ENCODE measurements at regions of chr4 and their contacts with region 1.

Region 1: DNA sequence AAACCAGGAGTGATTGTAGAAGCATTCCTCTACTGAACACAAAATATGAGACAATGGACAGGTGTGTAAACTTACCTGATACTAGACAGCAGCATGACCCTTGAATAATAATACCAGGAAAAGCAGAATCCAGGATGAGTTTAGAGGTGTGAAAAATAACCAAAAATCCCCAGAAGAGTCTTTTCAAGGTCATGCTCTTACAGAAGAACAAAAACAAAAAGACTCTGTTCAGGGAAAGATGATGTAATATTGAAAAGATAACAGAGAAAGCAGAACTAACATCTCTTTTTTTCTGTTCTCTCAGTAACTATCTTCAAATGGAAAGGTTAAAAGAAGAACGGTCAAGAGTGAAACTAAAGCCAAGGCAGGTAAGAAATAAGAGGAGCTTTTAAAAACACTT is 14.0 kb upstream of the ARHGAP10 start:
- DNase-seq: no peak
- H3K4me3 Mint-ChIP-seq: no peak overlapping the region
- H3K27ac Mint-ChIP-seq: no peak overlapping the region
- H3K4me1 Mint-ChIP-seq: peaks cover 10% of the 10 kb centered on the region
- H3K27me3 Mint-ChIP-seq: peaks cover 18% of the 10 kb centered on the region

Region 2: DNA sequence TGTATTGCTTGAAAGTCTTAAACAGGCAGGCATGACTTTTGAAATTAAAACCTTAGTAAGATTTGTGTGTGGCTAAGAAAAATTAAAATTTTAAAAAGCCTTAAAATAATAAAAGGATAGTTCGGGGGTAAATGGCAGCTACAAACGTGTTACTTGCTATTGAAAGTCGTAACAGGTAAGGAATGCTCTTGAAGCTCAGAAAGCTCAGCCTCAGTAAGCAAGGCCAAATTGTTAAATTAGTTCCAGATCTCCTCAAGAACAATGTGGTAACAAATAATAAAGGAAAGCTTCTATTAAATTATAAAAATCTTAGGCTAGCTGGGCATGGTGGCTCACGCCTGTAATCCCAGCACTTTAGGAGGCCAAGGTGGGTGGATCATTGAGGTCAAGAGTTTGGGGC is 59.4 kb before region 1 on chr4:
- intact Hi-C with region 1: no loop called
- DNase-seq: no peak
- H3K4me3 Mint-ChIP-seq: no peak overlapping the region
- H3K27ac Mint-ChIP-seq: no peak overlapping the region
- H3K4me1 Mint-ChIP-seq: no peaks in the 10 kb centered on the region
- H3K27me3 Mint-ChIP-seq: no peaks in the 10 kb centered on the region

Region 3: GRCh38 chr4:147741190-147741785 is 23.4 kb after region 1 on chr4:
- intact Hi-C with region 1: loop called (anchors 2 kb)
- DNase-seq: no peak
- H3K4me3 Mint-ChIP-seq: no peak overlapping the region
- H3K27ac Mint-ChIP-seq: no peak overlapping the region
- H3K4me1 Mint-ChIP-seq: peaks cover 28% of the 10 kb centered on the region
- H3K27me3 Mint-ChIP-seq: peaks cover 2% of the 10 kb centered on the region

Region 4: DNA sequence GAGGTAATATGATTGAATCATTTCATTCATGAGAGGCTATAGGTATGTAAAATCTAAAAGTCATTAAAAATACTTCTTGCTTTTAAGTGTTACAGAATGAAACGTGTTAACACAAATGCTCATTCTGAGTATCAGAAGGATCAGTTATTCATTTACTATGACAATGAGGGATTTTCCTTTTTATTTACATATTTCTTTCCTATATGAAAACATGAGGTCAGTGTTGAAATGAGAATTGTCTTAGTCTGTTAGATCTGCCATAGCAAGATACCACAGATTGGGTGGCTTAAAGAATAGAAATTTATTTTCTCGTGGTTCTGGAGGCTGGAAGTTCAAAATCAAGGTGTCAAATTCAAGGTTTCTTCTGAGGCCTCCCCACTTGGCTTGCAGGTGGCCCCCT is 195.3 kb after region 1 on chr4:
- intact Hi-C with region 1: no loop called
- DNase-seq: no peak
- H3K4me3 Mint-ChIP-seq: no peak overlapping the region
- H3K27ac Mint-ChIP-seq: no peak overlapping the region
- H3K4me1 Mint-ChIP-seq: no peaks in the 10 kb centered on the region
- H3K27me3 Mint-ChIP-seq: no peaks in the 10 kb centered on the region